ENCODE measurements at regions of chr10 and their contacts with region 1.

Region 1: GRCh38 chr10:71974489-71975021 is 10.4 kb downstream of the CHST3 start:
- H3K4me3 ChIP-seq: no peak overlapping the region
- H3K27ac ChIP-seq: no peak overlapping the region
- H3K4me1 ChIP-seq: peaks cover 3% of the 10 kb centered on the region
- CTCF ChIP-seq: no peak

Region 2: GRCh38 chr10:71939861-71940474 is 34.6 kb before region 1 on chr10:
- CTCF ChIA-PET with region 1: no interaction called
- POLR2A ChIA-PET with region 1: no interaction called
- H3K4me3 ChIP-seq: no peak overlapping the region
- H3K27ac ChIP-seq: no peak overlapping the region
- H3K4me1 ChIP-seq: no peaks in the 10 kb centered on the region
- CTCF ChIP-seq: no peak

Region 3: DNA sequence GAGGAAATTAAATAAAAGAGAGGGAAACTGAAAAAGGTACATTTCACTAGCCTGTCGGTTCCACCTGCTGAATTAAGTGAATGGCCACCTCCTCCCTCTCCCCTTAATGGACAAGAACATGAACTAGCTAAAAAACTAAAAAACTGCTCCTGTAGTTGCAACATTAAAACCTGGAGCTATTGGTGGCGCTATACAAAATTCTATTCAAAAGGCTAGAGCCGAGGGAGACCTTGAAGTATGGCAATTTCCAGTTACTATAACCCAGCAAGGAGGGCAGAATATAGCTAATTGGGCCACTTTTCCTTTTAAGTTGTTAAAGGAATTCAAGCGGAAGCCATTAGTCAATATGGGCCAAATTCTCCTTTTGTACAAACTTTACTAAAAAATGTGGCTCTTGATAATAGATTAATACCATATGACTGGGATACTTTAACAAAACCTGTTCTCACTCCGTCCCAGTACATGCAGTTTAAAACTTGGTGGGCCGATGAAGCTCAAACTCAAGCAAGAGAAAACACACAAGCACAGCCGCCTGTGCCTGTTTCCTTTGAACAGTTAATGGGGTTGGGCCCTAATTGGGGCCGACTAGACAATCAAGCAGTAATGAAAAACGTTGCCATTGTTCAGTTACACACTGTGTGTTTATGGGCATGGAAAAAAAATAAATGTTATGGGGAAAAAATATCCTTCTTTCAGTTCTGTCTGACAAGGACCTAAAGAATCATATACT is 16.8 kb before region 1 on chr10:
- CTCF ChIA-PET with region 1: interaction called, 23 read pairs
- POLR2A ChIA-PET with region 1: no interaction called
- H3K4me3 ChIP-seq: no peak overlapping the region
- H3K27ac ChIP-seq: no peak overlapping the region
- H3K4me1 ChIP-seq: no peaks in the 10 kb centered on the region
- CTCF ChIP-seq: no peak

Region 4: GRCh38 chr10:71984809-71985388 is 10.3 kb after region 1 on chr10:
- CTCF ChIA-PET with region 1: interaction called, 15 read pairs
- POLR2A ChIA-PET with region 1: no interaction called
- H3K4me3 ChIP-seq: no peak overlapping the region
- H3K27ac ChIP-seq: no peak overlapping the region
- H3K4me1 ChIP-seq: peaks cover 10% of the 10 kb centered on the region
- CTCF ChIP-seq: no peak